HEK293T (cell line): ENCODE measurements at regions of chr6 and their contacts with region 1.

Region 1: DNA sequence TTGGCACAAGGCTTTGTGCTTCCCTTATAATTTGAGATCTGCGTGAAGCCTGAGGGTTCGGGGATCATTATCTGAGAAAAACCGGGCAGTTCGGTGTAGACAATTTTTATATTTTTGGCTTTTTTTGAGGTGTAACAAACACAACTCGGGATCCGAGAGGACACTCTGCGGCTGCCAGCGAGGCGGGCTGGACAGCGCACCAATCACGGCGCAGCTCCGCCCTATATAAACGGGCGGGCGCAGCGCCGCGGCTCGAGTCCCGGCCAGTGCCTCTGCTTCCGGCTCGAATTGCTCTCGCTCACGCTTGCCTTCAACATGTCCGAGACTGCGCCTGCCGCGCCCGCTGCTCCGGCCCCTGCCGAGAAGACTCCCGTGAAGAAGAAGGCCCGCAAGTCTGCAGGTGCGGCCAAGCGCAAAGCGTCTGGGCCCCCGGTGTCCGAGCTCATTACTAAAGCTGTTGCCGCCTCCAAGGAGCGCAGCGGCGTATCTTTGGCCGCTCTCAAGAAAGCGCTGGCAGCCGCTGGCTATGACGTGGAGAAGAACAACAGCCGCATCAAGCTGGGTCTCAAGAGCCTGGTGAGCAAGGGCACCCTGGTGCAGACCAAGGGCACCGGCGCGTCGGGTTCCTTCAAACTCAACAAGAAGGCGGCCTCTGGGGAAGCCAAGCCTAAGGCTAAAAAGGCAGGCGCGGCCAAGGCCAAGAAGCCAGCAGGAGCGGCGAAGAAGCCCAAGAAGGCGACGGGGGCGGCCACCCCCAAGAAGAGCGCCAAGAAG is 69.0 kb downstream of the HFE start:
- DNase-seq: peak; percentile 88

Region 2: GRCh38 chr6:25998379-25998778 is 157.9 kb before region 1 on chr6:
- CTCF ChIA-PET with region 1: no interaction called
- POLR2A ChIA-PET with region 1: no interaction called
- DNase-seq: no peak

Region 3: GRCh38 chr6:26054857-26055669 is 101.2 kb before region 1 on chr6:
- CTCF ChIA-PET with region 1: interaction called, 3 read pairs
- POLR2A ChIA-PET with region 1: interaction called, 76 read pairs
- DNase-seq: peak; percentile 62

Region 4: GRCh38 chr6:26136321-26136720 is 19.9 kb before region 1 on chr6:
- CTCF ChIA-PET with region 1: interaction called, 3 read pairs
- POLR2A ChIA-PET with region 1: interaction called, 47 read pairs
- DNase-seq: no peak

Region 5: GRCh38 chr6:26196846-26197648 is 40.8 kb after region 1 on chr6:
- CTCF ChIA-PET with region 1: no interaction called
- POLR2A ChIA-PET with region 1: interaction called, 121 read pairs
- DNase-seq: no peak

Region 6: DNA sequence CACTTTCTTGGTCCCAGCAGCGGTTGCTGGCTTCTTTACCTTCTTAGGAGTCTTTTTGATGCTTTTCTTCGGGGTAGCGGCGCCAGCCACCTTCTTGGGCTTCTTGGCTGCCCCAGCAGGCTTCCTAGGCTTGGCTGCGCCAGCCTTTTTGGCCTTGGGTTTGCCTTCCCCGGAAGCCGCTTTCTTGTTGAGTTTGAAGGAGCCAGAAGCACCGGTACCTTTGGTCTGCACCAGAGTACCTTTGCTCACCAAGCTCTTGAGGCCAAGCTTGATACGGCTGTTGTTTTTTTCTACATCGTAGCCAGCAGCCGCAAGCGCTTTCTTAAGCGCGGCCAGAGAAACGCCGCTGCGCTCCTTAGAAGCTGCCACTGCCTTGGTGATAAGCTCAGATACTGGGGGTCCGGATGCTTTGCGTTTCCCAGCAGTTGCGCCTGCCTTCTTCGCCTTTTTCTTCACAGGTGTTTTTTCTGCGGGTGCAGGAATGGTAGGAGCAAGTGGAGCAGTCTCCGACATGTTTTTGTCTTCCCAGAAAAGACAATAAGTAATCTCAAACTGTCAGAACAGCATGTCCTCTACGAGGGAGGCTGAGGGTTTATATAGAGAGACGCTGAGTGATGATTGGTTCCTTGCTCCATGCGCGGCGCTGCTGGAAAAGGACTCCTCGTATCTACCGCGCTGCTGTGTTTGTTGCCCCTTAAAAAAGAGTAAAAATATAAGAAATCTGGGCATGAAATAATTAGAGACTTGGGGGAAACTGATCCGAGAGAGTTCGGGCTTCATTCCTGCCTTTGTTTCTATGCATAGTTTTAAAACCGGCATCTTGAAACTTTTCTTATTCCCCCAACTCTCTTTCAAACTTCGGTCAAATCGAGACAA is 78.4 kb after region 1 on chr6:
- CTCF ChIA-PET with region 1: no interaction called
- POLR2A ChIA-PET with region 1: interaction called, 11 read pairs
- DNase-seq: peak; percentile 72

Region 7: GRCh38 chr6:26445934-26446667 is 289.8 kb after region 1 on chr6:
- CTCF ChIA-PET with region 1: no interaction called
- POLR2A ChIA-PET with region 1: no interaction called
- DNase-seq: no peak

Region 8: DNA sequence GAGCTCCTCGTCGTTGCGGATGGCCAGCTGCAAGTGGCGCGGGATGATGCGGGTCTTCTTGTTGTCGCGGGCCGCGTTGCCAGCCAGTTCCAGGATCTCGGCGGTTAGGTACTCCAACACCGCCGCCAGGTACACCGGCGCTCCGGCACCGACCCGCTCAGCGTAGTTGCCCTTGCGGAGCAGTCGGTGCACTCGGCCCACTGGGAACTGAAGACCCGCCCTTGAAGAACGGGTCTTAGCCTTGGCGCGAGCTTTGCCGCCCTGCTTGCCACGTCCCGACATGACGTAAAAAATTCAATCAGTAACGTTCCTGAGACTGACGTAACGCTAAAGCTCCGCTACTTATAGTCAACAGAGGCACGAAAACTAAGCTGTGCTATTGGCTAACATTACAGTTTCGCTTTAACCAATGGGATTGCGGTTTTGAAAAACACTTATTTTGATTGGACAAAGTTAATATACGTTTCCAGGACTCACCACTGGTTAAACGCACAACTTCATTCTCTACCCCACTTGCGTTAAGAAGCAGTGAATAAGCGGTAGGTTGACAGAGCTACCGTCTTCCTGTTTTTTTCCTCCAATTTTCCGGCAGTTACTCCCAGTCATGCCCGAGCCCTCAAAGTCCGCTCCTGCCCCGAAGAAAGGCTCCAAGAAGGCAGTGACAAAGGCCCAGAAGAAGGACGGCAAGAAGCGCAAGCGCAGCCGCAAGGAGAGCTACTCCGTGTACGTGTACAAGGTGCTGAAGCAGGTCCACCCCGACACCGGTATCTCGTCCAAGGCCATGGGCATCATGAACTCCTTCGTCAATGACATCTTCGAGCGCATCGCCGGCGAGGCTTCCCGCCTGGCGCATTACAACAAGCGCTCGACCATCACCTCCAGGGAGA is 1682.0 kb after region 1 on chr6:
- CTCF ChIA-PET with region 1: no interaction called
- POLR2A ChIA-PET with region 1: interaction called, 37 read pairs
- DNase-seq: peak; percentile 79